Motor neuron (in vitro differentiated cells): ENCODE measurements at regions of chr1 and their contacts with region 1.

Region 1: GRCh38 chr1:13992489-13993285 is 292.7 kb downstream of the PRDM2 start:
- ATAC-seq: peak in 1 of 8 experiments; percentile 39
- H3K4me3 ChIP-seq: no peak overlapping the region
- H3K27ac ChIP-seq: no peak overlapping the region
- H3K4me1 ChIP-seq: no peaks in the 10 kb centered on the region

Region 2: GRCh38 chr1:14094611-14095400 is 102.1 kb after region 1 on chr1:
- in situ Hi-C with region 1: loop called in 1 of 9 experiments (anchors 25 kb)
- ATAC-seq: peak in 4 of 8 experiments; percentile 18 to 51 (median 29)
- H3K4me3 ChIP-seq: no peak overlapping the region
- H3K27ac ChIP-seq: no peak overlapping the region
- H3K4me1 ChIP-seq: peaks cover 8 to 15% of the 10 kb centered on the region in 2 donors

Region 3: DNA sequence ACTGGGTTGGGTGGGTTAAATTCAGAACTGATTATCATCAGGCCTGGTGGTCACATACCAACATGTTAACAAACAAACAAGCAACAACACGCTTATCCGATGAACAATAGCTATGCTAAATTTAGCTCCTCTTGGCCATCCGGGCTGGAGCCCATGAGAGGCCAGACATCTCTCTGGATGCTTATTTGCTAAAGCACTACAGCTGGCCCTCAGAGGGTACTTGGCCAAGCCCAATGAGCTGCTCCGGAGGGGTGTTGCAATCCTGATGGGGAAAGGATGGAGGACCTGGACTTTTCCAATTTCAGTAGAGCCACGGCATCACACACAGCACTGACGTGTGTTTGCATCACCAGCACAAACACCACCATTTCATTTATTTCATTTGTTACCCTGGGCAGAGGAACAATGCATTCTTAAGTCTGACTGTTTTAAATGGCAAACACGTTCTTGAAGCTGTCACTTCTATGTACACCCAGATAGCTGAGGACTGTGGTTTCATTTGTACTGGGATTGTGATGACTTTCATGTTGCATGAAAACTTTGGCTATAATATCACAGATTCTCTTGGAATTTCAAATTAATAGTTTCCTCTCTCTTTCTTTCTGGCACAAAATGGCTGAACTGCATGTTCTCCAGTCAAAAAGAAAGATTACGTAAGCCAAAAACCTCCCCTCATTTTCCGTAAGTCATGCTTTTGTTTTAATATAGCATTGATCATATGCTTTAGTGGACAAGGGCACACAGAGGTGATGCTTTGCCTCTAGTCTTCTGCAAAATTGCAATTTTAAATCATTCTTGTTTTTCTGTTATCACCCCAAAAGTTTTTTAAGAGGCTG is 246.0 kb after region 1 on chr1:
- in situ Hi-C with region 1: no loop called
- ATAC-seq: peak in 1 of 8 experiments; percentile 32
- H3K4me3 ChIP-seq: no peak overlapping the region
- H3K27ac ChIP-seq: no peak overlapping the region
- H3K4me1 ChIP-seq: peaks cover 17 to 20% of the 10 kb centered on the region in 2 donors

Region 4: DNA sequence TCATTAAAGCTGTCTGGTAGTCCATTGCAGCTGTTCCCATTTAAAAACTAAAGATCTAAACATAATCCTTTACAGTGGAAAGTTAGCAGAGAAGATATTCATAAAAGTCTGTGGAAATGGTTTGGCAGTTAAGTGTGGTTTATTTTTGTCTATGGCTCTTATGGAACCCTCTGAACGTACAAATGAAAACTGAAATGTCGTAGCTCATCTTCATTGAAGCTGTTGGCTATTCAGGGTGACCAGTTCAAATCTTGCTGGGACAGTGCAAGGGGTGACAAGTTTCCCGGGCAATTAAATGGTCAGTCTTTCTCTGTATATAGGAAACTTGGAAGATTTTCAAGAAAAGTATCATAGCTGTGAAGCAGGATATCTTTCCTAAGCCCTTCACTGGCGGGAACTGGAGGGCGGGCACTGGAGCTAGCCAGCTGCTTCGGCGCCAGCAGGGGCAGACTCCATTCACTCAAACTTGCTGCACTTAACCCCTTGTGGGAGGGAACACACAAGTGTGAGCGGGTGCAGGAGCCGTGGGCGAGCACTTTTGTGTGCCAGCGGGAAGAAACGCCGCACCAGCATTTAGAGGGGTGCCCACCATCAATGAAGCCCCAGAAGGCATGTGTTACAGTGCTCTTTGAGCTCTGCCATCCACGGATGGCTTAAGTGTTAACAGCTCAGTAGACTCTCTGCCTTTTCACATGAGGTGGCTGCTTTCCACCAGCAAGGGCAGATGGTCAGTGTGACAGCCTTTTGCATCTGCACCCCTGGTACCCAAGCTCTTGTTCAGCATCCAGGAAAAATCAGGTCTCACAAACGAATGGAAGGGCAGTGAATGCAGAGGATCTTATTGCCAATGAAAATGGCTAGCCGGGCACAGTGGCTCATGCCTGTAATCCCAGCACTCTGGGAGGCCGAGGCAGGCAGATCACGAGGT is 373.7 kb after region 1 on chr1:
- in situ Hi-C with region 1: loop called in 1 of 9 experiments (anchors 25 kb)
- ATAC-seq: peak in 3 of 8 experiments; percentile 39 to 92 (median 79)
- H3K4me3 ChIP-seq: no peak overlapping the region
- H3K27ac ChIP-seq: no peak overlapping the region
- H3K4me1 ChIP-seq: peaks cover 19 to 27% of the 10 kb centered on the region in 2 donors